ENCODE measurements at regions of chr6 and their contacts with region 1.

Region 1: GRCh38 chr6:135183532-135184440 is 2.7 kb downstream of the MYB start:
- DNase-seq: peak; percentile 89
- ATAC-seq: peak; percentile 47
- H3K4me3 Mint-ChIP-seq: peak overlapping the region; percentile 96
- H3K27ac Mint-ChIP-seq: peak overlapping the region; percentile 89
- H3K4me1 Mint-ChIP-seq: peaks cover 35% of the 10 kb centered on the region
- H3K27me3 Mint-ChIP-seq: no peaks in the 10 kb centered on the region

Region 2: GRCh38 chr6:135046912-135047311 is 136.9 kb before region 1 on chr6:
- CTCF ChIA-PET with region 1: interaction called, 10 read pairs
- POLR2A ChIA-PET with region 1: interaction called, 6 read pairs
- DNase-seq: no peak
- ATAC-seq: peak; percentile 82
- H3K4me3 Mint-ChIP-seq: no peak overlapping the region
- H3K27ac Mint-ChIP-seq: no peak overlapping the region
- H3K4me1 Mint-ChIP-seq: peaks cover 56% of the 10 kb centered on the region
- H3K27me3 Mint-ChIP-seq: no peaks in the 10 kb centered on the region

Region 3: DNA sequence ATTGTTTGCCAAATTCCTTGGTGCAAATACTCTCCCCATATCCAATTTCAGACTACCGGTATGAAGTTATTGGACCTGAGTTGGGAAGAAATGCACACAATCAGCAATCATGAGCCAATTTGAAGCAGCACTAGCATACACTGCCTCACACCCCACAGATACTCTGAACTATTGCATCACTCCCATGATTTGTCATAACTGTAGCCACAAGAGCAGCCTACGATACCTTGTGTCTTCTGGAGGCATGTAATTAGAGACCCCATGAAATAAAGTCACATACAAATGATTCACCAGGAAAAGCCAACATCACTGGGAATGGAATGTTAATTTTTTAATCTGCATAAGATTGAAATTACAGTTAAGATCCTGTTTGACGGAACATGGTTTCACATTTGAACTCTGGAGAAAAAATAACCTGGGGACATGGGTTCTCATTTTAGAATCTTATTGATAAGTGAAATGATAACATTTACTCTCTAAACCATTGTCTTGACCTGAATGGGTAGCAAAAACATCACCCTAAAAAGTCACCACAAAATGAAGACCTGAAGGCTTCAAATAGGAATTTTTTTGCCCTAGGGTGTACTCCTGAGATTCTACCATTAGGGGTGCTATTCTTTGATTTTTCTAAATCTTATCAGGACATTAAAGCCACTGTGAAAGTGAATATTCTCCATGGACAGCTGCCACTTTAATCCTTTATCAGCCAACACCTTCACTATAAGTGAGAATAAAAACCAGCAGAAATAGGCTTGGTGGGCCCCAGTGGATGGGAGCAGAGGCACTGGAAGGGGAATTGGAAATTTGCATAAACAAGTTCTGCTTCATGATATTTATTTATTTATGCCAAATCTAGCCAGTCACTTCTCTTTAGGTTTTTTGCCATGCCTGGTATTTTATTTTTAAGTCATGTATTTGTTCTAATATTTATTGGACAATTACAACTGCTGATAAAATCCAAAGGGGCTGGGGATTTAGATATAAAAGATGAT is 94.7 kb before region 1 on chr6:
- CTCF ChIA-PET with region 1: interaction called, 53 read pairs
- POLR2A ChIA-PET with region 1: interaction called, 32 read pairs
- DNase-seq: peak; percentile 62
- ATAC-seq: peak; percentile 78
- H3K4me3 Mint-ChIP-seq: peak overlapping the region; percentile 69
- H3K27ac Mint-ChIP-seq: peak overlapping the region; percentile 88
- H3K4me1 Mint-ChIP-seq: peaks cover 78% of the 10 kb centered on the region
- H3K27me3 Mint-ChIP-seq: no peaks in the 10 kb centered on the region

Region 4: GRCh38 chr6:135102191-135102590 is 81.6 kb before region 1 on chr6:
- CTCF ChIA-PET with region 1: interaction called, 8 read pairs
- POLR2A ChIA-PET with region 1: interaction called, 18 read pairs
- DNase-seq: no peak
- ATAC-seq: no peak
- H3K4me3 Mint-ChIP-seq: no peak overlapping the region
- H3K27ac Mint-ChIP-seq: no peak overlapping the region
- H3K4me1 Mint-ChIP-seq: peaks cover 37% of the 10 kb centered on the region
- H3K27me3 Mint-ChIP-seq: no peaks in the 10 kb centered on the region

Region 5: DNA sequence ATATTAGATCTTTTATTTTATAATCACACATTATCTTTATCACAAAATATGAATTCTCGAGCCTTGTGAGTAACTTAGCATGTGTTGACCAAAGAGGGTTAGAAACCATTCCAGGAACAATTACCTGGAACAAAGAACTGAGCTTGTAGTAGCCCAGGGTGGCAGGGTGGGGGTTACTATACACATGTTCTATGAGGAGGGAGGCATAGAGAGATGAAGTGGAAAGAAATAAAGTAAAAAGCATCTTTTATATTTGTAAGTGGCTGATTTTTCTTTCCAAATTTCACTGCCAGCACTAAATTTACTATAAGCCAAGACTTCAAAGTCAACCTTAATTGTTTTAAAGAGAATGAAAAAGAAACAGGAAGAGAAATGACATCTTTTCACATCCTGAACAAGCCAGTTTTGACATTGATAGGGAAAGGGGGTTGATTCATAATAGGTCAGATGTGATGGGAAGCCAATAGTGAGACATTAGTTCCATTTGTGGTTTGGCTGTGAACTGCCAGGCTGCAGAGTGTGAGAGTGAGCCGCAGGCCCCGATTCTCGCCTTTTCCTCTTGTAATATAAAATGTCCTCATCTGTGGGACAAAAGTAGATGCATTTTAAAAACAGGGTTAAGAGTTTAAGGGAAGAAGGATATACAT is 55.4 kb before region 1 on chr6:
- CTCF ChIA-PET with region 1: interaction called, 14 read pairs
- POLR2A ChIA-PET with region 1: interaction called, 8 read pairs
- DNase-seq: peak; percentile 71
- ATAC-seq: peak; percentile 91
- H3K4me3 Mint-ChIP-seq: peak overlapping the region; percentile 49
- H3K27ac Mint-ChIP-seq: peak overlapping the region; percentile 90
- H3K4me1 Mint-ChIP-seq: peaks cover 40% of the 10 kb centered on the region
- H3K27me3 Mint-ChIP-seq: no peaks in the 10 kb centered on the region

Region 6: DNA sequence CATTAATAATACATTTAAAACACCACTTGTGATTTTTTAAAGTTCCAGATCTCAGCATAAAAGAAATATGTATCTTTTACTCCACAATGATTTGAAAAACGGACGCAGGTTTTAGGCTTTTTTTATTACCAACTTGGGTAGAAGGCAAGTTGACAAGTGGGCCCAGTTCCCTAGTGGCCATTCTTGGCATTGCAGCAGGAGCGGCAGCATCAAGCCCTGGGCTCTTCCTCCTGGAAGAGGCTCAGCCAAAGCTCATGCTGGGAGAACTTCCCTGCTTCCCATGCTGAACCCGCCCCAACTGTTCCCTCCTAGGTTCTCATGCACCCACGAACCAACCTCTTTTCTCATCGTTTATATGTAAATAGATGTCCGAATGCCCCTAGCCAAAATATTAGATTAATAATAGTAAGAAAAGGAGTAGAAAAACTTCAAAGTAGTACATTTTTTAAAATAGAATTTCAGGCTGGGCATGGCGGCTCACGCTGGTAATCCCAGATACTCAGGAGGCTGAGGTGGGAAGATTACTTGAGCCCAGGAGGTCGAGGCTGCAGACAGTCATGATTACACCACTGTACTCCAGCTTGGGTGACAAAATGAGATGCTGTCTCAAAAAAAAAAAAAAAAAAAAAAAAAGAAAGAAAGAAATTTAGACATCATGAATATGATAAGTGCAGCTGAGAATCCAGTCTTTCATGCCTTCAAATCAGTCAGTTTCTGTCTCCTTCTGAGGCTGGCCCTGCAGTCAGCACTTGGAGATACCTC is 20.9 kb before region 1 on chr6:
- CTCF ChIA-PET with region 1: interaction called, 165 read pairs
- POLR2A ChIA-PET with region 1: interaction called, 212 read pairs
- DNase-seq: peak; percentile 55
- ATAC-seq: no peak
- H3K4me3 Mint-ChIP-seq: peak overlapping the region; percentile 17
- H3K27ac Mint-ChIP-seq: peak overlapping the region; percentile 68
- H3K4me1 Mint-ChIP-seq: peaks cover 45% of the 10 kb centered on the region
- H3K27me3 Mint-ChIP-seq: no peaks in the 10 kb centered on the region

Region 7: GRCh38 chr6:135451693-135452092 is 267.9 kb after region 1 on chr6:
- CTCF ChIA-PET with region 1: no interaction called
- POLR2A ChIA-PET with region 1: no interaction called
- DNase-seq: no peak
- ATAC-seq: peak; percentile 30
- H3K4me3 Mint-ChIP-seq: no peak overlapping the region
- H3K27ac Mint-ChIP-seq: no peak overlapping the region
- H3K4me1 Mint-ChIP-seq: no peaks in the 10 kb centered on the region
- H3K27me3 Mint-ChIP-seq: no peaks in the 10 kb centered on the region